Gastrocnemius medialis (tissue), 4 donors: ENCODE measurements at regions of chr11 and their contacts with region 1.

Region 1: GRCh38 chr11:3049430-3050243 is 7.6 kb downstream of the CARS1 start:
- DNase-seq: peak; percentile 91 to 95
- ATAC-seq: peak; percentile 93 to 94
- H3K4me3 ChIP-seq: peak overlapping the region in 2 of 4 donors; percentile 36 to 37
- H3K27ac ChIP-seq: peak overlapping the region; percentile 86 to 91 (median 89)
- H3K4me1 ChIP-seq: peaks cover 47 to 52% of the 10 kb centered on the region in 2 donors
- H3K27me3 ChIP-seq: no peaks in the 10 kb centered on the region
- CTCF ChIP-seq: peak in 4 of 5 experiments; percentile 15 to 50 (median 36)
- POLR2A ChIP-seq: peak in 1 of 2 donors; percentile 24

Region 2: GRCh38 chr11:2870460-2870859 is 179.2 kb before region 1 on chr11:
- in situ Hi-C with region 1: no loop called
- intact Hi-C with region 1: no loop called
- DNase-seq: no peak
- ATAC-seq: no peak
- H3K4me3 ChIP-seq: no peak overlapping the region
- H3K27ac ChIP-seq: no peak overlapping the region
- H3K4me1 ChIP-seq: no peaks in the 10 kb centered on the region
- H3K27me3 ChIP-seq: peaks cover 28 to 40% (median 34%) of the 10 kb centered on the region in 3 donors
- CTCF ChIP-seq: no peak
- POLR2A ChIP-seq: no peak

Region 3: DNA sequence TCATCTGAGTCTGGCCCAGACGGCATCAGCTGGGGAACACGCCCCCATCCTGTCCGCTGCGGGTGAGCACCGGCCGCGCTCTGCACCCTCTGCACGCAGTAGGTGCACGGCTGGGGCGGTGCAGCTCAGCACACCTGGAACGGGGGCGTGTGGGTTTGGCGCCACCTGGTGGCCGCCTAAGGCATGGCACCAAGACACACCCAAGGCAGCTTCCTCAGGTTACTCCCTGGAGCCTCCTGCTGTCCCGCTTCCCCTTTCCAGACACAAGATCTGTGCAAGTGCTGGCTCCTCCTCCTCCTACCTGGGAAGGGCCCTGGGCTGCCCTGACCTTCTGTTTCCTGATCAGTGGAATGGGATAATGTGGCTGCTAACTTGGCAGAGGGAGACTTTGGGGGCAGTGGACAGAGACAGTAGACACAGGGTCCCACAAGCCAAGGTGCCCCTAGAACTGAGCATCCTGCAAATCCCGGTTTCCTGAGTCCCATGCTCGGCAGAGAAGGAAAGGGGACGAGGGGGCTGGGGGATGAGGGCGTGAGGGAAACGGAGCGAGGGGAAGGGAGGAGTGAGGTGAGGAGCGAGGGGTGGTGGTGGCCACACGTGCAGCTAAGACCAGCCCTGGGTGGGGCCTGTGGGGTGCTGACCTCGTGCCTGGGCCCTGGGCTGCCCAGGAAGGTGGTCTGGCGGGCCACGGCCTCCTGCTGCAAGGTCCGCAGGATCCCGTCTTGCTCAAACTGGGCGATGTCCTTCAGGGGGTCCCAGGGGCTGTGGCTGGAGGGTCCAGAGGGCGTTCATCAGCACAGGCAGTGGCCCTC is 42.4 kb after region 1 on chr11:
- in situ Hi-C with region 1: loop called in 2 of 4 experiments (anchors 5 kb)
- intact Hi-C with region 1: loop called (anchors 2 kb)
- DNase-seq: peak; percentile 38 to 74
- ATAC-seq: peak; percentile 77 to 82
- H3K4me3 ChIP-seq: no peak overlapping the region
- H3K27ac ChIP-seq: no peak overlapping the region
- H3K4me1 ChIP-seq: peaks cover 6 to 20% of the 10 kb centered on the region in 2 donors
- H3K27me3 ChIP-seq: no peaks in the 10 kb centered on the region
- CTCF ChIP-seq: peak; percentile 98 to 100 (median 100)
- POLR2A ChIP-seq: no peak

Region 4: DNA sequence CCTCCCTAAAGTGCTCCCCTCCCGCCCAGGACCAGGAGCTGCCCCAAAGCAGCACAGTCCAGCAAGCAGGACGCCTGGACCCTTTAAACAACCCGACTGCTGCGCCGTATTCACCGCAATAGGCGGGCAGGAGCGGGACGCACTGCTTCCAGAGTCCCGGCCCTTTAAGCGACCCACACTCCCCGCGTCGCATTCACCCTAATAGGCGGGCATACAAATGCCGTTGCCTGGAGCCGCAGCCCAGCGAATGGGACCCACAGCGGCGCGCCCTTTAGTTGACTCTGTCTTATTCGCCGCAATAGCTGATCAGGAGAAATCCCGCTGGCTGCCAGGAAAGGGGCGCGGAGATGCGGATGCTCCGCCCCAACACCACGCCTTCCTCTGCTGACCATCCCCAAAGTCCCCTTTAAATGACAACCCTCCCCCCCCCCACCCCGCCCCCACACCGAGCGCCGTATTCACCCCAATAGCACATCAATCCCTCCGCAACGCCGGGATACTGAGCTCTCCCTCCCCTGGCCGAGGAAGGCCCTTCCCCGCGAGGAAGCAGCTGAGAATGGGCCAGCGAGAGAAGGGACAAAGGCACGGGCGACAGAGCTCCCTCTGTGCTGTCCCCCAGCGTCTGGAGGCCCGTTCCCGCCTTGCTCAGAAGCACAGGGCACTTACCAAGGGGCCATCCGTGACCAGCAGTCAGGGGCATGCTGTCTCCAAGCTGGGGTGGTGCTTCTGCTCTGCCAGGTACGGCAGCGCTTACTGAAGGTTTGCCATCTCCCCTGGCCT is 110.8 kb after region 1 on chr11:
- in situ Hi-C with region 1: no loop called
- intact Hi-C with region 1: loop called (anchors 5 kb)
- DNase-seq: peak; percentile 68 to 78
- ATAC-seq: peak; percentile 71 to 74
- H3K4me3 ChIP-seq: peak overlapping the region; percentile 57 to 68 (median 64)
- H3K27ac ChIP-seq: peak overlapping the region; percentile 71 to 81 (median 80)
- H3K4me1 ChIP-seq: peaks cover 59 to 67% of the 10 kb centered on the region in 2 donors
- H3K27me3 ChIP-seq: no peaks in the 10 kb centered on the region
- CTCF ChIP-seq: no peak
- POLR2A ChIP-seq: no peak

Region 5: DNA sequence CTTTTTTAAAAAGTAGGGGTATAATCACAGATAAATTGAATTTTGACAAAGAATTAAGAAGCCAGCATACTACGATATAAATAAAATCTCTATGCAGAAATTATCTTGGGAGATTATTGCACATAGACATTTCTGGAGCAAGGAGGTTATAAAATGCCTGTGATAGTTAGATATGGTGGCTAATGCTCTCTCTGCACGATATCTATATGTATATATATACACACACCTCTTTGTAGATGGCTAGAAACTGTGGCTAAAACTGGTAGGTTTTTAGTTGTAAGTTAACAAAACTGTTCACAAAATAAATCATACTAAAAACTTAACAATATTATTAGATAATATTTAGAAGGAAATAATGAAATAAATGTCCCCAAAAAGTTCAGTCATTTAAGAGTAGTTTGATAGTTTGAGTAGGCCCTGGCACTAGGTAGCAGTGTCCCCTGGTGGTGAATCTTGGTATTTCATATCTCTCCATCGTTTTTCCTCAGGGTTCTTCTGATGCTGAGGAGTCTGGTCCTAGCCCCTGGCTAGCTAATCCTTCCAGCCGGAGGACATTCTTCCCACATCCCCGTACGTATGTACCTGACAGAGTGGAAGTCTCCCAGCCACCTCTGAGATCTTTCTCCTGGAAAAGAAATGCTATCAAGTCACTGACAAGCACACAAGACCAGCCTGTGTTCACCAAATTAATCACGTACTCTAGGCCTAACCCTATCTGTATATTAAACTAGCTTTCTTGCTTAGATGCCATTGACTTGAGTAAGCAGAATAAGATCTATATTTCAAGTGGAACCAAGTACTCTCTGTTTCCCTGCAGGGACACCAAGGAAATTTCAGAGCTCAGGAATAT is 560.0 kb after region 1 on chr11:
- in situ Hi-C with region 1: no loop called
- intact Hi-C with region 1: loop called (anchors 10 kb)
- DNase-seq: no peak
- ATAC-seq: no peak
- H3K4me3 ChIP-seq: no peak overlapping the region
- H3K27ac ChIP-seq: no peak overlapping the region
- H3K4me1 ChIP-seq: peaks cover 8 to 14% of the 10 kb centered on the region in 2 donors
- H3K27me3 ChIP-seq: no peaks in the 10 kb centered on the region
- CTCF ChIP-seq: peak; percentile 64 to 89 (median 83)
- POLR2A ChIP-seq: no peak

Region 6: DNA sequence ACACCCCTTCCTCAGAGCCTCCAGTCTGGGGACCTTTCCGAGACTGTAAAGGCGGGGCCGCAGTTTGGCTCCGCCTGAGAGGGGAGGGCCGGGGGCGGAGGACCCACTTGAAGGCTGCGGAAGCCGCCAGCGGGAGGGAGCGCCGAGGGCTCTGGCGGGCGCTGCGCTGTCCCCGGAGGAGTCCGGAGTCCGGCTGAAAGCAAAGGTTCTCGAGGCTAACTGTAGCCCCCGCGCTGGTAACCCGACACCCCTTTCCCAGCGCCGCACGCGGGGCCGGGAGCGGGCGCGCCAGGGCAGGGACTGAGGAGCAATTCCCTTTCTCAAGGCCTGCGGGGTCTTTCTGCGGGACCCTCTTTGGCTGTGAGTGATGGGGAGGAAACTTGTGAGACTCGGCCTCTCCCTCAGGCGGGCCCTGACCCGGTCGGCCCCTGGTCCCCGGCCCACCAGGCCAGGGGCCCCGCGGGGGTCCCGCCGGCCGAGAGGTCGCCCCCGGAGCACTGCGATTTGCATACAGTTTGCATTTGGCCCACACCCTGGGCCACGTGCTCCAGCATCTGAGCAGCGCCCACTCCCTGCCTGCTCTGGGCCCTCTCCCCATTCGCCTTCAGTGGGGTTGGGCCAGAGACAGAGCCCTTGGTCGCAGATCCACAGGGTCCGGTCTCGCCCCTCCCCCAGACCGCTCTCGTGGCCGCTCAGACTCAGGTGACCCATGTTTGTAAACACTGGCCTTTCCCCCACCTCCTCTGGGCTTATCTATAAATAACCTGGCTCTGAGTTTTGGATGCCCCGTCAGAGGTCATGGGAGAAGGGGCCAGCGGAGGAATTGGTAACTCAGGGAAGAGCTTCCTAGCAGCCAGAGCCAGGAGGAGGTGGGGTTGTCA is 592.7 kb after region 1 on chr11:
- in situ Hi-C with region 1: no loop called
- intact Hi-C with region 1: loop called (anchors 10 kb)
- DNase-seq: peak; percentile 91 to 96
- ATAC-seq: peak; percentile 67
- H3K4me3 ChIP-seq: peak overlapping the region; percentile 67 to 88 (median 78)
- H3K27ac ChIP-seq: peak overlapping the region; percentile 97 to 100 (median 98)
- H3K4me1 ChIP-seq: peaks cover 32 to 47% of the 10 kb centered on the region in 2 donors
- H3K27me3 ChIP-seq: no peaks in the 10 kb centered on the region
- CTCF ChIP-seq: no peak
- POLR2A ChIP-seq: peak; percentile 88 to 95